Activated naive CD4-positive, alpha-beta T cell treated with anti-CD3 and anti-CD28 coated beads for 36 hours (primary cell): ENCODE measurements at regions of chr3 and their contacts with region 1.

Region 1: GRCh38 chr3:188170461-188171459 is 16.8 kb downstream of the LPP start:
- DNase-seq: peak; percentile 89
- H3K4me3 Mint-ChIP-seq: peak overlapping the region; percentile 39
- H3K27ac Mint-ChIP-seq: peak overlapping the region; percentile 86
- H3K4me1 Mint-ChIP-seq: peaks cover 64% of the 10 kb centered on the region
- H3K27me3 Mint-ChIP-seq: no peaks in the 10 kb centered on the region

Region 2: DNA sequence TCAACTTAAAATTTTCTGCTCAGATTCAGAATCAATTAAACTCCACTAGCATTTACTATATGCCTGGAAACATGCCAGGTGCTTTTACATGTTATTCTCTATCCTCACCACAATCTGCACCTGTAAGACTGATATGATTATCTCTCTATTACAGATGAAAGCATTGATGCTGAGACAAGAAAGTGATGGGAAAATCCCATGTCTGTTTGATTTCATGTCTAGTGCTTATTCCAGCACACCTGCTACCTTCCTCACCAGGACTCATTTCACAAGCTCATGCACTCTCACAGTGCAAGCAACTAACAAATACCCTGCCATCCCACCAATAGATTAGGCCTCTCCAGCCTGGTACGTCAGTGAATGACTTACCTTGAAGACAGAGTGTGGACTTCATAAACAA is 400.5 kb before region 1 on chr3:
- CTCF ChIA-PET with region 1: no interaction called
- intact Hi-C with region 1: loop called (anchors 1 kb)
- DNase-seq: peak; percentile 73
- H3K4me3 Mint-ChIP-seq: no peak overlapping the region
- H3K27ac Mint-ChIP-seq: peak overlapping the region; percentile 82
- H3K4me1 Mint-ChIP-seq: peaks cover 38% of the 10 kb centered on the region
- H3K27me3 Mint-ChIP-seq: no peaks in the 10 kb centered on the region

Region 3: DNA sequence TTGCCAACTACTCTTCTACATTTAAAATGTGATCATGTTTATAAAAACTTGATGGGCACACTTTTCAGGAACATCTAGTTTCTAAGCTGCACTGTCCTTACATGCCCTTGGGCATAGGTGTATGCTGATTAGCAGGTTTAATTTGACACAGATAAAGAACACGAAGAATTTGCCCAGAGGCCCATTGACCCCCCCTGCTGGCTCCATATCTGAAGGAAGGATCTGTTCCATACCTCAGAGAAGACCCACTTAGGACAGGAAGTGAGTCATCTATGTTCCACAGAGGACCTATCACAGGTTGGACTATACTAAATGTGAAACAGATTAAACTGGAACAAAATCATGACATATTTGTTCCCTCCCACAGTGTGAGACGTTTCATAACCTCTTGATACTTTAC is 109.6 kb before region 1 on chr3:
- CTCF ChIA-PET with region 1: no interaction called
- intact Hi-C with region 1: loop called (anchors 1 kb)
- DNase-seq: peak; percentile 74
- H3K4me3 Mint-ChIP-seq: no peak overlapping the region
- H3K27ac Mint-ChIP-seq: peak overlapping the region; percentile 68
- H3K4me1 Mint-ChIP-seq: peaks cover 32% of the 10 kb centered on the region
- H3K27me3 Mint-ChIP-seq: no peaks in the 10 kb centered on the region

Region 4: DNA sequence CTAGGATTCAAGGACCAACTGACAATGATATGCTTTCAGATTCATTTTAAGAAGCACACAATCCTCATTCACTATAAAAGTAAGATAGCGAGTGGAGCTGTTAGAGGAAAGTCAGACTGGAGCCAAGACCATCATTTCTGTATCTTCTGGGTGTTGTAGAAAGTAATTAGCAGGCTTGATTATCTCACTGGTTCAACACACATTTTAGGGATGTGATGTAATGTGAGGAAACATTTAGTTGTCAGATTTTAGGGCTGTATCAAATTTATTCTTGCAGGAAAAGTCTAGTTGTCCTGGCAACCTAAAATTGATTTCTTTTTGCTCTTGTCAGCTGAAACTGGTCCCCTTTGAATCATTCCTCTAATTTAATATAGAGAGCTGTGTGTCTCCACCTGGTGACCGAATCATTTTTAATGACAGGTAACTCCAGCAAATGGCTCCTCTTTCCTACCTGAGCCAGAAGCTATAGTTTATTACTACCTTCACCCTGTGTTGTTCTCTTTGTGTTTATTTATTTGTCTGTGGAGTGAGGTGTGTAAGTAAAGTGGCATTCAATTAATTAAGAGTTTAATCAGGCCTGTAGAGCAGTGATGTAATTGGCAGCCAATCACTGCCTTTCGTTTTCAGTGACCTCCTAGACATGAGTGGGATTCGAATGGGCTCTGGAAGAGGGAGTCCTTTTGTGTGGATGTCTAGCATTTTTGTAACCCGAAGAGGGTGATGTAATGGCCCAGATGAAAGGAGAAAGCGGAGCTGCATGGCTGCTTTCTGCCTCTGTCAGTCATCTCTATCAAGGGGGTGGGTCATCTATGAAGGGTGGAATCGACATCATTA is 109.0 kb after region 1 on chr3:
- CTCF ChIA-PET with region 1: interaction called, 3 read pairs
- intact Hi-C with region 1: loop called (anchors 1 kb)
- DNase-seq: no peak
- H3K4me3 Mint-ChIP-seq: no peak overlapping the region
- H3K27ac Mint-ChIP-seq: no peak overlapping the region
- H3K4me1 Mint-ChIP-seq: peaks cover 29% of the 10 kb centered on the region
- H3K27me3 Mint-ChIP-seq: no peaks in the 10 kb centered on the region

Region 5: GRCh38 chr3:188309437-188310269 is 138.9 kb after region 1 on chr3:
- CTCF ChIA-PET with region 1: no interaction called
- intact Hi-C with region 1: loop called (anchors 1 kb)
- DNase-seq: no peak
- H3K4me3 Mint-ChIP-seq: no peak overlapping the region
- H3K27ac Mint-ChIP-seq: peak overlapping the region; percentile 22
- H3K4me1 Mint-ChIP-seq: peaks cover 25% of the 10 kb centered on the region
- H3K27me3 Mint-ChIP-seq: no peaks in the 10 kb centered on the region

Region 6: GRCh38 chr3:188389711-188390342 is 219.1 kb after region 1 on chr3:
- CTCF ChIA-PET with region 1: no interaction called
- intact Hi-C with region 1: loop called (anchors 1 kb)
- DNase-seq: peak; percentile 85
- H3K4me3 Mint-ChIP-seq: no peak overlapping the region
- H3K27ac Mint-ChIP-seq: peak overlapping the region; percentile 67
- H3K4me1 Mint-ChIP-seq: peaks cover 39% of the 10 kb centered on the region
- H3K27me3 Mint-ChIP-seq: no peaks in the 10 kb centered on the region

Region 7: GRCh38 chr3:188954590-188955208 is 783.9 kb after region 1 on chr3:
- CTCF ChIA-PET with region 1: interaction called, 3 read pairs
- intact Hi-C with region 1: loop called (anchors 5 kb)
- DNase-seq: peak; percentile 91
- H3K4me3 Mint-ChIP-seq: no peak overlapping the region
- H3K27ac Mint-ChIP-seq: no peak overlapping the region
- H3K4me1 Mint-ChIP-seq: peaks cover 39% of the 10 kb centered on the region
- H3K27me3 Mint-ChIP-seq: no peaks in the 10 kb centered on the region